ENCODE measurements at regions of chr21 and their contacts with region 1.

Region 1: GRCh38 chr21:15455819-15456462 is 273.8 kb upstream of the USP25 start:
- DNase-seq: peak; percentile 87
- H3K4me3 ChIP-seq: peak overlapping the region in 1 of 4 donors; percentile 28
- H3K27ac ChIP-seq: peak overlapping the region; percentile 52 to 74 (median 68)
- H3K4me1 ChIP-seq: peaks cover 0 to 33% (median 1%) of the 10 kb centered on the region in 4 donors
- H3K27me3 ChIP-seq: no peaks in the 10 kb centered on the region
- CTCF ChIP-seq: no peak
- EP300 ChIP-seq: no peak
- POLR2A ChIP-seq: peak; percentile 24

Region 2: GRCh38 chr21:15293240-15293639 is 162.7 kb before region 1 on chr21:
- in situ Hi-C with region 1: loop called in 1 of 4 experiments (anchors 25 kb)
- intact Hi-C with region 1: no loop called
- DNase-seq: no peak
- H3K4me3 ChIP-seq: no peak overlapping the region
- H3K27ac ChIP-seq: no peak overlapping the region
- H3K4me1 ChIP-seq: peaks cover 0 to 31% (median 3%) of the 10 kb centered on the region in 4 donors
- H3K27me3 ChIP-seq: no peaks in the 10 kb centered on the region
- CTCF ChIP-seq: no peak
- EP300 ChIP-seq: no peak
- POLR2A ChIP-seq: no peak

Region 3: GRCh38 chr21:15552914-15553494 is 97.1 kb after region 1 on chr21:
- in situ Hi-C with region 1: no loop called
- intact Hi-C with region 1: no loop called
- DNase-seq: no peak
- H3K4me3 ChIP-seq: no peak overlapping the region
- H3K27ac ChIP-seq: no peak overlapping the region
- H3K4me1 ChIP-seq: no peaks in the 10 kb centered on the region
- H3K27me3 ChIP-seq: no peaks in the 10 kb centered on the region
- CTCF ChIP-seq: peak; percentile 21 to 43 (median 39)
- EP300 ChIP-seq: no peak
- POLR2A ChIP-seq: no peak